Breast epithelium (tissue), 4 donors: ENCODE measurements at regions of chr12 and their contacts with region 1.

Region 1: DNA sequence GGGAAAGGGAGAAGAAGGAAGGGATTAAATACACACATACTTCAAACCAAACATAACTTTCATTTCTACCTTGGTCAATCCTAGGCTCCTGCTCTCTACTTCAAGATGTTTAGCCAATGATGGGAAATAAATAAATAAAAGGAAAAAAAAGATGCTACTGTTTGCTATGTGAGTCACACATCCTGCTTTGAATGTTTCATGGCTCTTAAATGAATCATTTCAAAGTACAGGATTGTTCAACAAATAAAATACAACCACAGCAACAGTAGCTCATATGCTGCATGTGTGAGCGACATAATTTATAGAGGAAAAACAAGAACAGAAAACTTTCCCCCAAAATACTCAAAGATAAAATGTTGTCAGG is 54.3 kb upstream of the NPFF start:
- DNase-seq: no peak
- H3K4me3 ChIP-seq: no peak overlapping the region
- H3K27ac ChIP-seq: peak overlapping the region; percentile 78 to 81
- H3K4me1 ChIP-seq: peaks cover 0 to 25% of the 10 kb centered on the region in 2 donors
- H3K27me3 ChIP-seq: no peaks in the 10 kb centered on the region
- CTCF ChIP-seq: no peak
- POLR2A ChIP-seq: no peak

Region 2: DNA sequence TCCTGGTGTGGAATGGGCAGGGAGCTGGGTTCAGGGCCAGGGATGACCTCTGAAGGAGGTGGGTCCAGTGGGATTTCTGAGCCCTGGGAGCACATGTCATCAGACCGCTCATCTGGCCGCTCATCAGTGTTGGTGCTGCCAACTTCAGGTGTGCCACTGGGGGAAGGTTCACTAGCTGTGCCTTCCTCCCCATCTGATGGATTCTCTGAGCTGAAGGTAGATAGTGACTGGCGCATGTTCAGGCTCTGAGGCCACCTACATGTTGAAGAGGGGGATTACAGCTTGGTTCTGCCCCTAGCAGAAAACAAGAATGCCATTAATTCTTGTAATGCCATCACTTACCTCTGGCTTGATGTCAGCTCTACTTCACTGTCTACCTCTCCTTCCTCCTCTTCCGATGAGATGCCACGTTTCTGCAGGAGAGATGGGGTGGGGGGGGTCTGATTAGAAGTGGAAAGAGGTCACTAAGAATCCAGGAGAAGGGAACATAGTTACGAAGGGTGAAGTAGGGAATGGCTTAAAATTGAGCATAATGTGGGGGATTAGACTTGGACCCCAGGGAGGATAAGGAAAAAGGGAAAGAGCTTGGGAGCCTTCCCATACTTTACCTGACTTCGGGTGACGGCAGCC is 79.5 kb before region 1 on chr12:
- intact Hi-C with region 1: no loop called
- DNase-seq: no peak
- H3K4me3 ChIP-seq: no peak overlapping the region
- H3K27ac ChIP-seq: peak overlapping the region in 1 of 2 donors; percentile 55
- H3K4me1 ChIP-seq: no peaks in the 10 kb centered on the region
- H3K27me3 ChIP-seq: no peaks in the 10 kb centered on the region
- CTCF ChIP-seq: no peak
- POLR2A ChIP-seq: no peak

Region 3: DNA sequence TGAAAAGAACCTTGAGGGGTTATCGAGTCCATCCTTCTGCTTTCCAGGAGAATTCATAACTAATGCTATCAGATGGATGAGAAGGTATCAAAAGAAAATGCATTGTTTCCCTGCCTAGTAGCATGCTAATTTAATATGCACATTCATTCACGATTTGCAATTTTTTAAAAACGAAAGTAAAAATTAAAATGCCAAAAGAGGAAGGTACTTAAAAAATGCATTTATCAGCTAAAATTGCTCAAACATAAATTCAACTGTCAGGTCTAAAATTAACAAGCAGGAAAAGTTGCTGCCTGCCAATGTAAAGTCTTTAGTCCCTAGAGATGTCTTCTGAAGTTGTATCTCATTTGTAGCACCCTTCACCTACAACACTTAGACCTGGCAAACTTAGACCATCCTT is 56.7 kb after region 1 on chr12:
- intact Hi-C with region 1: loop called (anchors 10 kb)
- DNase-seq: no peak
- H3K4me3 ChIP-seq: peak overlapping the region; percentile 27 to 52 (median 30)
- H3K27ac ChIP-seq: no peak overlapping the region
- H3K4me1 ChIP-seq: no peaks in the 10 kb centered on the region
- H3K27me3 ChIP-seq: no peaks in the 10 kb centered on the region
- CTCF ChIP-seq: no peak
- POLR2A ChIP-seq: no peak

Region 4: DNA sequence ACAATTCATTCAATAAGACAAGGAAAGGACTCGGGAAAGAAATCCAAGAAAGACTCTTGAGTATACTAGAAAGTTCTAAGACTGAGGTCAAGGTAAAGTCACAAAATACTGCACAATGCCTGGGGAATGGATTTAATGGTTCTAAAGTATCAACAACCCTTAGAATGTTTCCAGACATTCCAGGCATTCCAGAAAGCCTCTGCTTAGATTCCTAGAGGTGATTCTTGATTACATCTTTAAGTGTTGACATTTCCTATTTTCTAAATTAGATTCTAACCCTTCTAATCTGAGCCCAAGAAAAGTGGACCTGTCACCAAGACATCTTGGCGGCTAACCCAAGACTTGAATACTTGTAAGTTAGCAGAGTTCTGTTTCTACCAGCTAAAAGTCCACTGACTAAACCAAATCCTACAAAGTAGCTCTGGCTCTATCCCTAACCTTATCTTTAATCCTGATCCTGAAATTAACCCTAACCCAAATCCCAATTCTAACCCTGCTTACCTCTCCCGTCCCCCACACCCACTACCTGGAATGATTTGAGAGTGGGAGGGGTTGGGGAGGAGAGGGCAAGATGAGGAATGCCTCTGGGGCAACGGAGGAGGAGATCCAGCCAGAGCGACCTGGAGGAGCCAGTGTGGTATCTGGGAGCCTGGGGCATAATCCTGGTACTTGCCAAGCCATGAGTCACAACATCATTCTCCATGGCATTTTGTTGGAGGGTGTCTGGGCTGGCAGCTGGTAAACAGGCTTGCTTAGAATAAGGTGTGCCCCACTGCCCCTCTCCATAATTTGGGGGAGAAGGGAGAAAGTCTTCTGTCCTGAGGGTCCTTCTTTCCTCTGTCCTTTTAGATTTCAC is 283.6 kb after region 1 on chr12:
- intact Hi-C with region 1: loop called (anchors 5 kb)
- DNase-seq: peak; percentile 79 to 83
- H3K4me3 ChIP-seq: no peak overlapping the region
- H3K27ac ChIP-seq: peak overlapping the region; percentile 73 to 77
- H3K4me1 ChIP-seq: peaks cover 0 to 18% of the 10 kb centered on the region in 2 donors
- H3K27me3 ChIP-seq: peaks cover 0 to 2% of the 10 kb centered on the region in 2 donors
- CTCF ChIP-seq: no peak
- POLR2A ChIP-seq: no peak